ENCODE measurements at regions of chr14 and their contacts with region 1.

Region 1: GRCh38 chr14:95515596-95516552 is 576 bp downstream of the SYNE3 start:
- DNase-seq: peak; percentile 87
- H3K4me3 ChIP-seq: peak overlapping the region; percentile 61 to 76
- H3K27ac ChIP-seq: no peak overlapping the region; a peak in 2 of 4 replicates
- H3K4me1 ChIP-seq: peaks cover 47 to 51% of the 10 kb centered on the region in 2 experiments
- H3K27me3 ChIP-seq: no peaks in the 10 kb centered on the region
- CTCF ChIP-seq: peak; percentile 46
- EP300 ChIP-seq: no peak
- RAD21 ChIP-seq: peak; percentile 12; the same call in 1 of the 2 replicates

Region 2: DNA sequence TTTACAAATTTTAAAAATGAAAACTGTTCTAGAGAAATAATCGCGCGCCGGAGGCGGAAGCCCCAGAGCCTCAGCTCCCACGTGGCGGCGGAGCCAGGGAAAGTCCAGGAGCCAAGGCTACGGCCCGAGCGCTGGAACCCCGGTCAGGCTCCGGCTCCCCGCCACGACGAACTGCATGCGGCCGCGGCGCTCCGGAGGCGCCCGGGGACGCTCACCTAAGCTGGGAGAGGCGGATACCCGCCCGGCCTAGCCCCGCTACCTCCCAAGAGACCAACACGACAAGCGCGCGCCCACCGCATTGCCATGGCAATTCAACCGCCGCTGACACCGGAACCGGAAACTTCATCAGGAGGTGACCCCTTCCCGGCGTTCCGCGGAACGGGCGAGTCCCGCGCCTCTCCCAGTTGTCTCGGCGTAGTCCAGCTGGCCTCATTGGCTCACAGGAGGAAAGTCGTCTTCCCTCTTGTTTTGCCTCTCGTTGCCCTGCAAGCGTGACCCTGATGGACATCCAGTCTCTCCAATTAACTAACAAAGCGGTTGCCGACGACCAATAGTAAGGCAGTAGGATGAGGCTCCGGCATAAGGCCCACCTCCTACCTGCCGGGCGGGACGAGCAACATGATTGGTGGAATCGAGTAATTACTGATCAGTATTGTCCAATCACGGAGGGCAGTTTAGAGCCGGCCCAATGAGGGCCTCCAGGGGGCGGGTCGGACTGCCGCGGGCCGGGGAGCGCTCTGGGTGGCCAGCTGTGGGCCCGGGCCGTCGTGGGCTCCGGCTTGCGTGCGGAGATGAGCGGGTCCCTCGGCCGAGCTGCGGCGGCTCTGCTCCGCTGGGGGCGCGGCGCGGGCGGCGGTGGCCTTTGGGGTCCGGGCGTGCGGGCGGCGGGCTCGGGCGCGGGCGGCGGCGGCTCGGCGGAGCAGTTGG is 18.7 kb after region 1 on chr14 and contains the start of gene GLRX5:
- CTCF ChIA-PET with region 1: interaction called, 7 read pairs
- POLR2A ChIA-PET with region 1: interaction called, 10 read pairs
- DNase-seq: peak; percentile 99
- H3K4me3 ChIP-seq: peak within 1 kb of the TSS; percentile 91 to 95
- H3K27ac ChIP-seq: peak within 1 kb of the TSS; percentile 87 to 94
- H3K4me1 ChIP-seq: peaks cover 23 to 42% of the 10 kb centered on the region in 2 experiments
- H3K27me3 ChIP-seq: no peaks in the 10 kb centered on the region
- CTCF ChIP-seq: no peak
- EP300 ChIP-seq: no peak
- RAD21 ChIP-seq: no peak
- polyA plus RNA-seq, gene GLRX5: 29.1 and 31.4 TPM in 2 replicates

Region 3: GRCh38 chr14:95662376-95663186 is 146.7 kb after region 1 on chr14:
- CTCF ChIA-PET with region 1: no interaction called
- POLR2A ChIA-PET with region 1: no interaction called
- DNase-seq: no peak
- H3K4me3 ChIP-seq: no peak overlapping the region
- H3K27ac ChIP-seq: no peak overlapping the region
- H3K4me1 ChIP-seq: peaks cover 0 to 18% of the 10 kb centered on the region in 2 experiments; a peak in 1 of 4 replicates
- H3K27me3 ChIP-seq: no peaks in the 10 kb centered on the region
- CTCF ChIP-seq: no peak
- EP300 ChIP-seq: no peak
- RAD21 ChIP-seq: no peak

Region 4: DNA sequence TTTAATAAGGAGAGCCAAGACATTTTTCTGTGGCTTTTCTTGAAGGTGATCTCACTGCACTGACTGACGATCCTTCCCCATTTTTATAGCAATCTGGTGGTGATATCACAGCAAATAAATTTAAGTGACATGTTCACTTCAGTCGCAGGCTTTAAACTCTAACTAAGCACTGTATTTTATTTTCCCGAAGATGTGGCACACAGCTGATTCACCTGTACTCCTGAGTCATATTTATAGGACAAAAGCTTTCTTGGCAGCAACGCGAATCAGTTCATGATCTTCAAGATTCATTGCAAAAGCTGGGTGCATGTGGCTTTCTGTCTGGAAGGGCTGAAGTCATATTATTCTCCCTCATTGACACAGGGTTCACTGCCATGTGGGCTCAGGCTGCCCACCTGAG is 280.9 kb after region 1 on chr14:
- CTCF ChIA-PET with region 1: no interaction called
- POLR2A ChIA-PET with region 1: no interaction called
- DNase-seq: no peak
- H3K4me3 ChIP-seq: no peak overlapping the region
- H3K27ac ChIP-seq: no peak overlapping the region
- H3K4me1 ChIP-seq: no peaks in the 10 kb centered on the region
- H3K27me3 ChIP-seq: no peaks in the 10 kb centered on the region
- CTCF ChIP-seq: no peak
- EP300 ChIP-seq: no peak
- RAD21 ChIP-seq: no peak